ENCODE measurements at regions of chr7 and their contacts with region 1.

Region 1: GRCh38 chr7:18570890-18571478 is 75.4 kb downstream of the HDAC9 start:
- DNase-seq: peak; percentile 39
- H3K4me3 ChIP-seq: no peak overlapping the region
- H3K27ac ChIP-seq: peak overlapping the region; percentile 23
- H3K4me1 ChIP-seq: peaks cover 93% of the 10 kb centered on the region
- CTCF ChIP-seq: peak; percentile 86

Region 2: GRCh38 chr7:18352339-18353255 is 218.4 kb before region 1 on chr7:
- CTCF ChIA-PET with region 1: no interaction called
- POLR2A ChIA-PET with region 1: interaction called, 3 read pairs
- intact Hi-C with region 1: loop called (anchors 5 kb)
- DNase-seq: peak; percentile 66
- H3K4me3 ChIP-seq: no peak overlapping the region
- H3K27ac ChIP-seq: no peak overlapping the region
- H3K4me1 ChIP-seq: peaks cover 9% of the 10 kb centered on the region
- CTCF ChIP-seq: peak; percentile 98

Region 3: GRCh38 chr7:18508443-18509427 is 62.2 kb before region 1 on chr7:
- CTCF ChIA-PET with region 1: no interaction called
- POLR2A ChIA-PET with region 1: interaction called, 21 read pairs
- intact Hi-C with region 1: no loop called
- DNase-seq: no peak
- H3K4me3 ChIP-seq: peak overlapping the region; percentile 45
- H3K27ac ChIP-seq: peak overlapping the region; percentile 32
- H3K4me1 ChIP-seq: peaks cover 89% of the 10 kb centered on the region
- CTCF ChIP-seq: no peak

Region 4: GRCh38 chr7:18530224-18531179 is 40.5 kb before region 1 on chr7:
- CTCF ChIA-PET with region 1: no interaction called
- POLR2A ChIA-PET with region 1: interaction called, 28 read pairs
- intact Hi-C with region 1: loop called (anchors 1 kb)
- DNase-seq: peak; percentile 63
- H3K4me3 ChIP-seq: peak overlapping the region; percentile 47
- H3K27ac ChIP-seq: peak overlapping the region; percentile 88
- H3K4me1 ChIP-seq: peaks cover 98% of the 10 kb centered on the region
- CTCF ChIP-seq: no peak

Region 5: DNA sequence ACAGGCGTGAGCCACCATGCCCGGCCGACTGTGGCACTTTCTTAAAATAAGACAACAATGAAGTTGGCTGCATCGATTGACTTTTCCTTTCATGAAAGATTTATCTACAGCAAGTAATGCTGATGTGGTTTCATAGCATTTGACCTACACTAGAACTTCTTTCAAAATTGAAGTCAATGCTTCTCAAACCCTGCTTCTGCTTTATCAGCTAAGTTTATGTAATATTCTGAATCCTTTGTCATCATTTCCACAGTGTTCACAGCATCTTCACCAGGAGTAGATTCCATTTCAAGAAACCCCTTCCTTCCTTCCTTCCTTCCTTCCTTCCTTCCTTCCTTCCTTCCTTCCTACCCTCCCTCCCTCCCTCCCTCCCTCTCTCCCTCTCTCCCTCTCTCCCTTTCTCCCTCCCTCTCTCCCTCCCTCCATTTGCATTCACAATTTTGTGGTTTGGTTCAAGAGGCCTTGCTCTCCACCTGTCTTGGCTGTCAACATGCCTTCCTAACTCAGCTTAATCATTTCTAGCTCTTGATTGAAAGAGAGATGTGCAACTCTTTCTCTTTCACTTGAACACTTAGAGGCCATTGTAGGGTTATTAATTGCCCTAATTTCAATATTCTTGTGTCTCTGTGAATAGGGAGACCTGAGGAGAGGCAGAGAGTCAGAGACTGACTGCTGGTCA is 23.3 kb before region 1 on chr7:
- CTCF ChIA-PET with region 1: no interaction called
- POLR2A ChIA-PET with region 1: interaction called, 15 read pairs
- intact Hi-C with region 1: no loop called
- DNase-seq: no peak
- H3K4me3 ChIP-seq: no peak overlapping the region
- H3K27ac ChIP-seq: no peak overlapping the region
- H3K4me1 ChIP-seq: peaks cover 37% of the 10 kb centered on the region
- CTCF ChIP-seq: no peak

Region 6: DNA sequence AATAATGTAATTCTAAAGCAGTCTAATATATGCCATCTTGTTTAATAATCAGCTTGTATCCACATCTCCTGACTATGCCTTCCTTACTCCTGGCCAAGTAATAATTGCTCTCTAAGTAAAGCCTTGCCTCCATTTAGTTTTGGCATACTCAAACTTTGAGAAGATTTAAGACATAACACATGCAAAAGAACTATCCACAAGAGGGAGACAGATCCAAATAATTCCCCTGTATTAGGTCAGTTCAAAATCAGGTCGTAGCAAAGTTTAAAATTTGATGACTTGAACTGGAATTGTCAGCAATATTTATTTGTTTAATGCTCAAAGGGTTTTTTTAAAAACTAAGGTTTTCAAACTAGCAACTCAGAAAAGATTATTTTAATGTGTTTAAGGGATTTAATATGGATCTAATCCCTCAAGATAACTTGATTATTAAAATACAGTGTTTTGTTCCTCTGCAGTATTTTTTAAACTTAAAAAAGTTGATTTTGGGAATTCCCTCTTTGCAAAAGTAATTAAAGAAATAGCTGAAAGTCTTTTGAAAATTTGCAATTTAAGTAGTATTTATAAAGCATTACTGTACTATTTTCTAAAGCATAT is 19.9 kb after region 1 on chr7:
- CTCF ChIA-PET with region 1: interaction called, 4 read pairs
- POLR2A ChIA-PET with region 1: interaction called, 27 read pairs
- intact Hi-C with region 1: no loop called
- DNase-seq: peak; percentile 43
- H3K4me3 ChIP-seq: no peak overlapping the region
- H3K27ac ChIP-seq: no peak overlapping the region
- H3K4me1 ChIP-seq: peaks cover 19% of the 10 kb centered on the region
- CTCF ChIP-seq: peak; percentile 82

Region 7: GRCh38 chr7:18927134-18927533 is 356.1 kb after region 1 on chr7:
- CTCF ChIA-PET with region 1: no interaction called
- POLR2A ChIA-PET with region 1: no interaction called
- intact Hi-C with region 1: no loop called
- DNase-seq: no peak
- H3K4me3 ChIP-seq: no peak overlapping the region
- H3K27ac ChIP-seq: no peak overlapping the region
- H3K4me1 ChIP-seq: no peaks in the 10 kb centered on the region
- CTCF ChIP-seq: no peak

Measured in OCI-LY7 (cell line).